AG04450 (cell line): ENCODE measurements at regions of chr1 and their contacts with region 1.

Region 1: GRCh38 chr1:224132901-224133300 is 19.0 kb downstream of the FBXO28 start:
- DNase-seq: no peak
- H3K4me3 ChIP-seq: no peak overlapping the region
- H3K27ac ChIP-seq: no peak overlapping the region
- H3K27me3 ChIP-seq: no peaks in the 10 kb centered on the region
- CTCF ChIP-seq: no peak

Region 2: DNA sequence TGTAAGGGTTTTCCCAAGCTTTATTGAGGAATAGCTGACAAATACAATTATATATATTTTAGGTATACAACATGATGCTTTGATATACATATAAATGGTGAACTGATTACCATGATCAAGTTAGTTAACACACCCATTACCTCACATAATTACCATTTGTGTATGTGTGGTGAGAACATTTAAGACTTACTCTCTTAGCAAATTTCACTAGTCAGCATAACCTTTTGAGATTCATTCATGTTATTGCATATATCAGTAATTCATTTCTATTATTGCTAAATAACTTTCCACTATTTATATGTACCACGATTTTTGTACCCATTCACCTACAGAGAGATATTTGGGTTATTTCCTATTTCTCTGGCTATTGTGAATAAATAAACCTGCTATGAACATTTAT is 271.0 kb before region 1 on chr1:
- CTCF ChIA-PET with region 1: interaction called, 10 read pairs
- POLR2A ChIA-PET with region 1: no interaction called
- DNase-seq: no peak
- H3K4me3 ChIP-seq: no peak overlapping the region
- H3K27ac ChIP-seq: no peak overlapping the region
- H3K27me3 ChIP-seq: peaks cover 7% of the 10 kb centered on the region
- CTCF ChIP-seq: no peak

Region 3: DNA sequence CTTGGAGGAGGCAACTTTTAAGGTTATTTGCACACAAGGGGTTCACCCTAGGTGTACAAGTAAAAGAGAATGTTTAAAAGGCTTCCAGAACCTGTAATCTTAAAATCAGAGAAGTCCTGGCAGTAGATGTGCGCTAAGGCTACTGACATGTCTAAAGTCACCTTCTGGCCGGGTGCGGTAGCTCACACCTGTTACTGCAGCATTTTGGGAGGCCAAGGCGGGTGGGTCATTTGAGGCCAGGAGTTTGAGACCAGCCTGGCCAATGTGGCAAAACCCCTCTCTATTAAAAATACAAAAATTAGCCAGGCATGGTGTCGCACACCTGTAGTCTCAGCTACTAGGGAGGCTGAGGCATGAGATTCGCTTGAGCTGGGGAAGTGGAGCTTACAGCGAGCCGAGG is 29.9 kb after region 1 on chr1:
- CTCF ChIA-PET with region 1: no interaction called
- POLR2A ChIA-PET with region 1: no interaction called
- DNase-seq: no peak
- H3K4me3 ChIP-seq: no peak overlapping the region
- H3K27ac ChIP-seq: no peak overlapping the region
- H3K27me3 ChIP-seq: no peaks in the 10 kb centered on the region
- CTCF ChIP-seq: no peak